ENCODE measurements at regions of chr1 and their contacts with region 1.

Region 1: GRCh38 chr1:84772428-84772943 is 82.2 kb upstream of the SSX2IP start:
- DNase-seq: peak; percentile 15 to 82 (median 59)
- ATAC-seq: peak; percentile 48 to 73 (median 68)
- H3K4me3 ChIP-seq: no peak overlapping the region
- H3K4me3 Mint-ChIP-seq: no peak overlapping the region
- H3K27ac ChIP-seq: no peak overlapping the region
- H3K27ac Mint-ChIP-seq: no peak overlapping the region
- H3K4me1 ChIP-seq: peaks cover 0 to 3% of the 10 kb centered on the region in 2 experiments
- H3K4me1 Mint-ChIP-seq: peaks cover 0 to 4% (median 0%) of the 10 kb centered on the region in 3 donors
- H3K27me3 ChIP-seq: peaks cover 0 to 4% of the 10 kb centered on the region in 2 experiments
- H3K27me3 Mint-ChIP-seq: peaks cover 0 to 9% of the 10 kb centered on the region in 2 donors

Region 2: DNA sequence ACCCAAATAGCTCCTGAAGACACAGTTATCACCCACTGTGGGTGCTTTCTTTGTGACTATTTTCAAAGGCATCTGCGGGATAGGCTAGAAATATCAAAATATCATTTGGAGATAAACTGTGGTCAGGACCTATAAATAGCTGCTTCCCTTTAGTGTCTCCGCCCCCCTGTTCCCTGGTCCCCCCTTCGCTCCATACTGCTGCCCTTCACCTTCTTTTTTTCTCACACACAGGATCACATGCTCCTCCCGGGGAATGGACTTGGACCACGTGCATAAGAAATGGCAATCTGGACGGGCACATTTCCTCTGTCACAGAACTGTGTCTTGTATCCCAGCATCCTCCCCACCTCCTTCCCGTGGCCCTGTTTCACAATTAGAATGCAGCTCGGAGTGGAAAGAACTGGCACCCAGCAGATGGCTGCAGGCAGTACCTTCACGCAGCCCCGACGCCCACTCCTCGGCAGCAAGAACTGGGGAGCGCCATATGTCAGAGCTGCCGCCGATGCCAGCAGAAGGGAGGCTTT is 13.5 kb before region 1 on chr1:
- CTCF ChIA-PET with region 1: interaction called, 4 to 10 read pairs
- POLR2A ChIA-PET with region 1: no interaction called
- DNase-seq: no peak
- ATAC-seq: peak in 3 of 4 experiments; percentile 6 to 46 (median 24)
- H3K4me3 ChIP-seq: peak overlapping the region; percentile 10 to 14
- H3K4me3 Mint-ChIP-seq: peak overlapping the region; percentile 5 to 60 (median 31)
- H3K27ac ChIP-seq: no peak overlapping the region
- H3K27ac Mint-ChIP-seq: no peak overlapping the region
- H3K4me1 ChIP-seq: peaks cover 0 to 7% of the 10 kb centered on the region in 2 experiments
- H3K4me1 Mint-ChIP-seq: peaks cover 6 to 10% (median 7%) of the 10 kb centered on the region in 3 donors
- H3K27me3 ChIP-seq: peaks cover 0 to 14% of the 10 kb centered on the region in 2 experiments
- H3K27me3 Mint-ChIP-seq: peaks cover 10 to 11% of the 10 kb centered on the region in 2 donors

Region 3: DNA sequence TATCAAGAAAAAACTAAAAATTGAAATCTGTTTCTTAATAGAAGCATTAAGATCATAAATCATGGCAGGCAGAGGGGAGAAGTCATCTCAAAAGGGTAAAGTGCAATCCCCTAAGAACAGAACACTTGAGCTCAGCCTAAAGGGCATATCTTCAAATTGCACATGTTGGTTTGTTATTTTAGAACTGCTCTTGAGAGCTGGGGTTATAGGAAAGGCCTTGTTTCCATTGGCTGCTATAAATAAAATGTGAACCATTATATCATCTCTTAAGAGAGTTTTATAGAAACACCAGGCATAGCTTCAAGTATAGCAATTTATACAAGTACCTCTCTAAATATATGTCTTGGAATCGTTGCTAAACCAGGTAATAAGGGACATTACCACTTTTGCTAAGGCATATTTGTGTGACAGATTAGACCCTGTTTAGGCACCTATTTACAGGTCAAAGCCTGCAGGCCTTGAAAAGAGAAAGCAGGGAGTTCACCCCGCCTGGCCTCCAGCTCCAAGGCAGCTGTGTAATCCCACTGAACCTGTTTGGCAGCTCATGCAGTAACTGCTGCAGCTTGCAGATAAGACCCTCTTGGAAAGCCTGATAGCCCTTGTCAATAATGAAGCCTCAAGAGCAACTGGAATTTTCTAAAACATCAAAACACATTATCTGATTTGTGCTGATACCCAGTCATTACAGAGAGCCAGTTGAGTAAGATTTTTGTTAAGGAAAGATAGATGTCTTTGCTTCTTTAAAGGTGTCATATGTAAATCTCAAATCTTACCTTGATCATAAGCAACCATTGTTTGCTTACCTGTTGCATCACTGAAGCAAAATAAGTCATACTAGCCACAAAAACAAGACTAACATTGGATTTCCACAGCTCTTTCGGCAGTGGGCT is 452.5 kb after region 1 on chr1:
- CTCF ChIA-PET with region 1: no interaction called
- POLR2A ChIA-PET with region 1: no interaction called
- DNase-seq: no peak
- ATAC-seq: no peak
- H3K4me3 ChIP-seq: no peak overlapping the region
- H3K4me3 Mint-ChIP-seq: no peak overlapping the region
- H3K27ac ChIP-seq: no peak overlapping the region
- H3K27ac Mint-ChIP-seq: no peak overlapping the region
- H3K4me1 ChIP-seq: no peaks in the 10 kb centered on the region
- H3K4me1 Mint-ChIP-seq: no peaks in the 10 kb centered on the region
- H3K27me3 ChIP-seq: no peaks in the 10 kb centered on the region
- H3K27me3 Mint-ChIP-seq: peaks cover 7 to 10% of the 10 kb centered on the region in 2 donors